ENCODE measurements at regions of chr18 and their contacts with region 1.

Region 1: GRCh38 chr18:42114310-42114943 is 159.4 kb downstream of the PIK3C3 start:
- DNase-seq: peak; percentile 61
- H3K4me3 Mint-ChIP-seq: no peak overlapping the region
- H3K27ac Mint-ChIP-seq: peak overlapping the region; percentile 71
- H3K4me1 Mint-ChIP-seq: peaks cover 17% of the 10 kb centered on the region
- H3K27me3 Mint-ChIP-seq: peaks cover 14% of the 10 kb centered on the region

Region 2: DNA sequence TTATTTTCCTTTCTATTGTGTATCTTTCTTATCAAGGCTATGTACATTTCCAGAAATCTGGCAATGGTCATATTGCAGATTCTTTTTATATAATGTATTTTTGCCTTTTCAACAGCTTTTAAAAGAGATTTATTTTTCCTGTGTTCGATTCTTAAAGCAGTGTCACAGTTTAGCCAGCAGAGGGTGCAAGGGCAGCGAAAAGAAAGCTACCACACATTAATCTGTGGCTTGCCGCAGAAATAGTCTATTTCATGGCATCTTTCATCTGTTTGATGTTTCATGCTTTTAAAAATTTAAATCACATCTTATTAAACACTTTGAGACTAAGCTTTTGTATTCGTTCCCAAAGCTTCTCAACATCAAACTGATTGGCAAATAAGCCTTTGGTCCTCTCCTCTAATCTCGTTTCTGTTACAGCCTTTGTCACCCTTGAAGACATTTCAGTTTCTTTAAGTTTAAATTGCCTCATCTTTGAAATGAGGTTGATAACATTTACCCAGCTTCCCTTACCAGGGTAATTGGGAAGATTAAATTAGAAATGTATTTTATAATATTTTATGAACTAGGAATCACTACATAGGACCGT is 86.1 kb before region 1 on chr18:
- CTCF ChIA-PET with region 1: interaction called, 19 read pairs
- POLR2A ChIA-PET with region 1: no interaction called
- DNase-seq: peak; percentile 30
- H3K4me3 Mint-ChIP-seq: no peak overlapping the region
- H3K27ac Mint-ChIP-seq: no peak overlapping the region
- H3K4me1 Mint-ChIP-seq: peaks cover 38% of the 10 kb centered on the region
- H3K27me3 Mint-ChIP-seq: no peaks in the 10 kb centered on the region

Region 3: DNA sequence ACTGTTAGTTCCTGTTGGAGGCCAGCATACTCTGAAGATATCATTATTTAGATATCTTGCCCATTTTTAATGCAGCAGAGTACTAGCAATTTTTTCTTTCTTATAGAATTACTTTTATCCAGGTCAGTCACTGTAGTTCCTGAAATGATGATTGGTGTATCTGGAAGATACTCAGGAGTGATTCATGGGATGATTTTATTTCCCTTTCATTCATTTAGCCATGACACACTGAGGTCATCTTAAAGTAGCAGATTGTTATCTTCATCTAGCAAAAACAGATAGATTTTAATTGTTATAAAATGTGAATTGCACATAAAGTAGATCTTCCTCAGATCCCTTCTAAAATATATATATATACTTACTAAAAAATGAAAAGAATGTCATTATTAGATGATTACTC is 50.3 kb before region 1 on chr18:
- CTCF ChIA-PET with region 1: interaction called, 11 read pairs
- POLR2A ChIA-PET with region 1: no interaction called
- DNase-seq: no peak
- H3K4me3 Mint-ChIP-seq: no peak overlapping the region
- H3K27ac Mint-ChIP-seq: no peak overlapping the region
- H3K4me1 Mint-ChIP-seq: peaks cover 13% of the 10 kb centered on the region
- H3K27me3 Mint-ChIP-seq: no peaks in the 10 kb centered on the region

Region 4: DNA sequence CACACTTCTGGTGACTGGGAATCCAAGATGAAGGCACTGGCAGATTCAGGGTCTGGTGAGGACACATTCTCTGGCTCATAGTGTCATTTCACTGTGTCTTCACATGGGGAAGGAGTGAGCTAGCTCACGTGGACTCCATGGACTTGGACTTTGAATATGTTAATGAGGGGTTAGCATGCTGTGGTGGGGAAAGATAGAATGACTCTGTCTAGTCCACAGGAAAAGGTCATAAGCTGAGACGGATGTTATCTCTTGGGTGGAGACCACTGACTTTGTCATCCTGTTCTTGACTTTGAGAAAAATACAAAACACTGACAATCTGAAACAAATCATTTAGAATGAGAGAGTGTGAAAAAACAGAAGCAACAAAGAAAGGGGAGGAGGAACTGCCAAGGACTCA is 13.5 kb before region 1 on chr18:
- CTCF ChIA-PET with region 1: interaction called, 17 read pairs
- POLR2A ChIA-PET with region 1: no interaction called
- DNase-seq: no peak
- H3K4me3 Mint-ChIP-seq: no peak overlapping the region
- H3K27ac Mint-ChIP-seq: peak overlapping the region; percentile 36
- H3K4me1 Mint-ChIP-seq: peaks cover 10% of the 10 kb centered on the region
- H3K27me3 Mint-ChIP-seq: peaks cover 6% of the 10 kb centered on the region

Region 5: DNA sequence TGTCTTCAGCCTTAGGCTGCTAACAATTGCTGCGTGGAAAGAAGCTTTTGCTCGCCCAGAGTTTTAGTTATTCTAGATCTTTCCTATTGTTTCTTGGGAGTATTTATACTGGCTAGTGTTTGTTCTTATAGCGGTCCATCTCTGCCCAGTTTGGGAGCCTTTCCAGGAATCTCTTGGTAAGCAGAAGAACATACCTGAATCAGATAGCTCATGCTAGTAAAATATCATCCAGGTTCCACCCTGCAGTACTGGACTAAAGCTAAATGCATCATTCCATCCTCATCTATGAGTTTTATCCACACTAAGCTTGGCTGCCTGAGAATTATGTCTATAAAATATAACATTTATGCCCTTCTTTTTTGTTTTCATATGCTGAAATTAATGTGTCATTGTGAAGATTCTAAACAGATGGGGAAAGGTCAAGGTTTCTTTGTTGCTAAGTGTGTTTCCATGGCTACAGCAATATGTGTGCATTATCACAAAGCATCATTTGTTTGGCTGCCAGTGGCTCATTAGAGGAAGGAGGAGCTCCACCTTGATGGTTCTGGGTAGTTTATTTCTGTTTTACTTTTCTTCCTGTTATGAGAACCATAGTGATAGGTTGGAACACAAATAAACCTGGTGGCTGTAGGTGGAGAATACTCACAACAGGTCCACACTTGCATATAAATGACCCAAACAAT is 23.4 kb after region 1 on chr18:
- CTCF ChIA-PET with region 1: interaction called, 13 read pairs
- POLR2A ChIA-PET with region 1: no interaction called
- DNase-seq: no peak
- H3K4me3 Mint-ChIP-seq: no peak overlapping the region
- H3K27ac Mint-ChIP-seq: no peak overlapping the region
- H3K4me1 Mint-ChIP-seq: no peaks in the 10 kb centered on the region
- H3K27me3 Mint-ChIP-seq: peaks cover 2% of the 10 kb centered on the region

Region 6: GRCh38 chr18:42437646-42438045 is 323.2 kb after region 1 on chr18:
- CTCF ChIA-PET with region 1: no interaction called
- POLR2A ChIA-PET with region 1: no interaction called
- DNase-seq: no peak
- H3K4me3 Mint-ChIP-seq: no peak overlapping the region
- H3K27ac Mint-ChIP-seq: no peak overlapping the region
- H3K4me1 Mint-ChIP-seq: no peaks in the 10 kb centered on the region
- H3K27me3 Mint-ChIP-seq: no peaks in the 10 kb centered on the region